Common myeloid progenitor, CD34-positive (primary cell): ENCODE measurements at regions of chr10 and their contacts with region 1.

Region 1: GRCh38 chr10:61750929-61751471 is 88.3 kb downstream of the CABCOCO1 start:
- DNase-seq: peak; percentile 85 to 90 (median 88)
- H3K4me3 ChIP-seq: peak overlapping the region in 3 of 7 experiments; percentile 7 to 22 (median 14)
- H3K27ac ChIP-seq: peak overlapping the region; percentile 62 to 69
- H3K4me1 ChIP-seq: peaks cover 30 to 75% (median 45%) of the 10 kb centered on the region in 4 experiments
- H3K27me3 ChIP-seq: no peaks in the 10 kb centered on the region

Region 2: GRCh38 chr10:61760943-61761824 is 10.2 kb after region 1 on chr10:
- CTCF ChIA-PET with region 1: interaction called, 85 read pairs
- POLR2A ChIA-PET with region 1: interaction called, 19 read pairs
- DNase-seq: no peak
- H3K4me3 ChIP-seq: no peak overlapping the region
- H3K27ac ChIP-seq: peak overlapping the region in 1 of 2 experiments; percentile 89
- H3K4me1 ChIP-seq: peaks cover 8 to 83% (median 45%) of the 10 kb centered on the region in 4 experiments
- H3K27me3 ChIP-seq: no peaks in the 10 kb centered on the region

Region 3: DNA sequence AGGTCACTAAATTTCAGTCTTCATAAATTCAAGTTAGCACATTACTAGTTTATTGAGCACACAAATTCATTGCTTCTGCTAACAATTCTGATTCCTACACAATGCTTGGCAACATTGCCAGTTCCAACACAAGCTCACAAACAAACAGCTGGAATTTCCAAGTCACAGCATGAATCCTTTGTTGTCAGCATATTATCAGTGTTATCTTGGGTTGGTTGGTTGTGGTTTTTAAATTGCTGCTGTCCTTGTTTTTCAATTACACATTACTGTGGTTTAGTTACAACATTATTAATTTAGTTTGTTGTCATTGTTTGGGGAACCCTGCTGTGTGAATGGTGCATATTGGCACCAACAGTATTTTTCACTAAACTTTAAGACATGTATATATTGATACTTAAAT is 64.5 kb after region 1 on chr10:
- CTCF ChIA-PET with region 1: interaction called, 32 read pairs
- POLR2A ChIA-PET with region 1: interaction called, 6 read pairs
- DNase-seq: peak in 2 of 3 donors; percentile 47 to 57
- H3K4me3 ChIP-seq: no peak overlapping the region
- H3K27ac ChIP-seq: no peak overlapping the region
- H3K4me1 ChIP-seq: peaks cover 0 to 30% (median 14%) of the 10 kb centered on the region in 4 experiments
- H3K27me3 ChIP-seq: no peaks in the 10 kb centered on the region

Region 4: DNA sequence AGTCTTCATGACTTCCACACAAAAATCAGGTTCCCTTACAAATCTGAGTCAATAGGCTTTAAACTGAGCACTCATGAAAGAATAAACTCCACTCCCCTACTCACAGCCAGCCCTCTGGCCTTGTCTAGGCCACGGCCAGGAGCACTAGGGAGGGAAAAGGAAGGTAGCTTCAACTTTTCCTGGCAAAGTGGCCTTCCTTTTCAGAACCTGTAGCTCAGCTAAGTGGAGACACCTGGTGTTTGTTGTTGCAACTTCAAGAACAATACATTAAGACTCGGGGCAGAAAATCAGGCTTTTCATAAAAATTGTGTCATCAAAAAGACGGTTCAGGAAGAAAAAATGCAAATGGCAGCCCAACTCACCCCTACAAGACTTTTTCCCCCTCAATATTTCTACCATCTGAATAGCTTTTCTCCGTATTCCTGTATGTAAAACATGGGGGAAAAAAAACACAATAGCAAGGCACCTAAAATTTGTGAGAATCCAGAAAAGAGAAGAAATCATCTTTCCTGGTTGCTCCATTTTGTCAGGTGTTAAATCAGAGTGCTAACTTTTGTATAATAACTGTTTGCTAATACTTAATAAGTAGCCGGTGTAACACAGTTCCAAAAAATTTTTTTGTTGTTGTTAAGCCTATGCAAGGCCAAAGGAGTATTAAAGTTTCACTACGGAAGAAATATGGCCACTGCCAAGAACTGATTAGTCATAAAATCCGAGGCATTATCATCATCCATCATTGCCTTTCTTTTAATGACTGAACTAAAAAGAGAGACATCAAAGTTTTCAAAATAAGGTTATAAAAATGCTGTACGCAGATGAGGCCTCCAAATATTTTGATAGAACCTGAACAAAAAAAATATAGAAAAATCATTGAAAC is 84.3 kb after region 1 on chr10:
- CTCF ChIA-PET with region 1: interaction called, 19 read pairs
- POLR2A ChIA-PET with region 1: no interaction called
- DNase-seq: peak; percentile 53 to 65 (median 64)
- H3K4me3 ChIP-seq: no peak overlapping the region
- H3K27ac ChIP-seq: peak overlapping the region in 1 of 2 experiments; percentile 6
- H3K4me1 ChIP-seq: peaks cover 6 to 33% (median 20%) of the 10 kb centered on the region in 4 experiments
- H3K27me3 ChIP-seq: no peaks in the 10 kb centered on the region

Region 5: GRCh38 chr10:61903221-61903927 is 152.4 kb after region 1 on chr10:
- CTCF ChIA-PET with region 1: interaction called, 22 read pairs
- POLR2A ChIA-PET with region 1: no interaction called
- DNase-seq: peak; percentile 67 to 86 (median 77)
- H3K4me3 ChIP-seq: peak overlapping the region; percentile 58 to 100 (median 92)
- H3K27ac ChIP-seq: peak overlapping the region; percentile 85 to 99
- H3K4me1 ChIP-seq: peaks cover 16 to 48% (median 29%) of the 10 kb centered on the region in 4 experiments
- H3K27me3 ChIP-seq: no peaks in the 10 kb centered on the region